ENCODE measurements at regions of chr14 and their contacts with region 1.

Region 1: DNA sequence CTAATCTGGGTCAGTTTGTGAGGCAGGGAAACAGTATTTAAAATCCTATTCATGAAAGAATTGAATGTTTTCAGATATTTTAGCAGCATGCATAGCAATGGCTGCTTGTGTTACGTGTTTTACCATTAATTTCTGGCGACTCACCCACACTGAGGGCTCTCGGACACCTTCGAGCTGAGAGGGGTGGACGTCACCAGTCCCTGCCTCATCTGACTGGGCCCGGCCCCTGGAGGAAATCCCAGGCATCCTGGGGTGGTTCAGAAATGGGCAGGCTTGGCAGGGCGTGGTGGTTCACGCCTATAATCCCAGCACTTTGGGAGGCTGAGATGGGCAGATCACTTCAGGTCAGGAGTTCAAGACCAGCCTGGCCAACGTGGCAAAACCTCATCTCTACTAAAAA is 329.7 kb downstream of the VRK1 start:
- DNase-seq: no peak
- H3K4me3 ChIP-seq: no peak overlapping the region
- H3K27ac ChIP-seq: no peak overlapping the region
- H3K27me3 ChIP-seq: no peaks in the 10 kb centered on the region
- CTCF ChIP-seq: no peak

Region 2: DNA sequence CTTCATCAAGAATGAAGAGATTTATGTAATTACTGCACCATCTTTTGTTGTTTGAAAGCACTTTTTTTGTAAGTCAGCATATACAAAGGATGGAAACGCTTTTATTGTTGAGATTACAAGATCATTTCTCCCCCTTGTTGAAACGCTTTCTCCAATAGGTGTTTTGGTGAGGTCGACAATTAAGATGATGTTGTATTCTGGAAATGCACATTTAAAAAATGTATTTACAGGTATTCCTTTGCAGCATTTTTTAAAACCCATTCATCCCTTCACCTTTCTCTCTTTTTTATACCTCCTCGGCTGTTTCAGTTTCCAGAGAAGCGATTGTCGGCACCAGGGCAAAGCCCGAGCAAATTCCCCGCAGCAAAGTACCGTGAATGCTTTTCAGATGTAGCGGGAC is 170.2 kb after region 1 on chr14:
- CTCF ChIA-PET with region 1: no interaction called
- POLR2A ChIA-PET with region 1: interaction called, 10 read pairs
- DNase-seq: no peak
- H3K4me3 ChIP-seq: no peak overlapping the region
- H3K27ac ChIP-seq: no peak overlapping the region
- H3K27me3 ChIP-seq: no peaks in the 10 kb centered on the region
- CTCF ChIP-seq: no peak